ENCODE measurements at regions of chr11 and their contacts with region 1.

Region 1: DNA sequence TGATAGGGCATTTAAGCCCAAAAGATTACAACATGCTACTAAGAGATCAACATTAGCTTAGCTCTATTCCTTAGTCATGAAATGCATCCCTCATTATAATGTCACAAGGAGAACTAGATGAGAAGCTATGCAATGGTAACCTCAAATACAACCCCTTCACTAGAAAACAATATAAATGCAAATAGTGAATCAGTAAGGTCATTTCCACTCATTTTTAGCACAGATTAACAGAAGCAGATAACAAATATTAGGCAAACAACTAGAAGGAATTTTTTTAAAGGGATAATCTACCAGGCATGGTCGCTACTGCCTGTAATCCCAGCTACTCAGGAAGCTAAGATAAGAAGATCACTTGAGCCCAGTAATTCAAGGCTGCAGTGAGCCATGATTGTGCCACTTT is 28.2 kb downstream of the SIK3 start:
- DNase-seq: no peak
- H3K4me3 ChIP-seq: no peak overlapping the region
- H3K27ac ChIP-seq: peak overlapping the region; percentile 15
- H3K4me1 ChIP-seq: peaks cover 51% of the 10 kb centered on the region
- H3K27me3 ChIP-seq: no peaks in the 10 kb centered on the region
- CTCF ChIP-seq: no peak

Region 2: GRCh38 chr11:117010808-117011540 is 59.0 kb before region 1 on chr11:
- CTCF ChIA-PET with region 1: no interaction called
- POLR2A ChIA-PET with region 1: interaction called, 20 read pairs
- intact Hi-C with region 1: no loop called
- DNase-seq: peak; percentile 90
- H3K4me3 ChIP-seq: peak overlapping the region; percentile 17
- H3K27ac ChIP-seq: peak overlapping the region; percentile 63
- H3K4me1 ChIP-seq: peaks cover 59% of the 10 kb centered on the region
- H3K27me3 ChIP-seq: no peaks in the 10 kb centered on the region
- CTCF ChIP-seq: no peak

Measured in A673 (cell line).